Endothelial cell of umbilical vein (primary cell): ENCODE measurements at regions of chr5 and their contacts with region 1.

Region 1: DNA sequence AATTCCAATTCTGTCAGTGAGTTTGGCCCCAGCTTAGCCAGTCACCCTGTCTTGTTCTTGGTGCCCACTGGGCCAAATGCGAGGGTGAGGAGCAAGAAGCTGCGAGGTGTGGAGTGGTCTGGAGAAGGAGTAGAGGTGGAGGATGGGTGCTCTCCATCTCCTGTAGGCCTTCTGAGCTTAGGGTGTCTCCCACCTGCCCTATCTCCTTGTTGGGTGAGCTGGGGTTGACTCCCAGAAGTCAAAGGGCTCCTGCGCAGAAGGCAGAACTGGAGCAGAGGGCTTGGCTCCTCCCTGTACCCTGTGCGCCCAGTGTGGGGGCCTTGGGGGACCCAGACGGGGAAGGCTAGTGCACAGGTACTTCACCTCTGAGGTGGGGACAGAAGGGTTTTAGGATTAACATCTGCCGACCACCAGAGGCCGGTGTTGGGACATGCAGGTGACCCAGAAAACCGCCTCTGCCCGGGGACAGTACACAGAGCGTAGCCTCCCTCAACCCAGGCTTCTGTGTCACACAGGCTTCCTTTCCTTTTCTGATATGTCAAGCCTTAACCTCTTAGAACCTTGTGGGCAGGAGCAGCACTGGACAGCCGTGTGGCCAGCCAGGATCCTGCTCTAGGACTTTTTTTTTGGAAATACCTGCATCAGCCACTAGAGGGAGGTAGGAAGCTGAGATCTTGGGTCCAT is 16.9 kb downstream of the IL5 start:
- DNase-seq: peak; percentile 75
- H3K4me3 ChIP-seq: no peak overlapping the region
- H3K27ac ChIP-seq: no peak overlapping the region
- H3K4me1 ChIP-seq: no peaks in the 10 kb centered on the region
- H3K27me3 ChIP-seq: peaks cover under 1 to 3% of the 10 kb centered on the region in 2 experiments
- CTCF ChIP-seq: peak; percentile 76 to 83
- POLR2A ChIP-seq: no peak

Region 2: GRCh38 chr5:132437604-132438266 is 88.7 kb before region 1 on chr5:
- CTCF ChIA-PET with region 1: no interaction called
- POLR2A ChIA-PET with region 1: no interaction called
- dilution Hi-C with region 1: no loop called
- intact Hi-C with region 1: no loop called
- DNase-seq: peak; percentile 16
- H3K4me3 ChIP-seq: no peak overlapping the region
- H3K27ac ChIP-seq: no peak overlapping the region
- H3K4me1 ChIP-seq: peaks cover 4% of the 10 kb centered on the region
- H3K27me3 ChIP-seq: no peaks in the 10 kb centered on the region
- CTCF ChIP-seq: no peak
- POLR2A ChIP-seq: no peak

Region 3: DNA sequence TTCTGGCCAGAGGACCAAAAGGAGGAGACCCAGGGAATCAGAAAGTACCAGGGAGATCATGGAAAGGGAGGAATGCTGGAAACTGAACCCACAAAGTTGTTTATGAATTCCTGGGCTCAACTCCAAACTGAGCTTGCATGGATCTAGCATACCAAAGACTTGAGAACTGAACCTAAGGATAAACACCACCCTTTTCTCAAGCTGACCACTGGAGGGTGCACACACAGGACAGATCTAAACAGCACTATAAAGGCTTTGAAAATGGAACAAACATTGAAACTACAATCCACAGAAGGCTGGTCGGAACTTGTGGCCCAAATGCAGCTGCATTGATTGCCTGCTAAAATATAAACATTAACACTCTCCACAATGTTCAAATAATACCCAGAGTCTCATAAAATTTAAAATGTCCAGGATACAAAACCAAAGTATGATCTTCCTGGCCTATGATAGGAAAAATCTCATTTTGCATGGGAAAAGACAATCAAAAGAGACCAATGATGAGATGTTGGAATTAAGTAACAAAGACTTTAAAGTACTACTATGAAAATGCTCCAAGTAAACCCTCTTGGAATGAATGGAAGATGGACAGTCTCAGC is 20.2 kb before region 1 on chr5:
- CTCF ChIA-PET with region 1: interaction called, 19 read pairs
- POLR2A ChIA-PET with region 1: no interaction called
- dilution Hi-C with region 1: no loop called
- intact Hi-C with region 1: no loop called
- DNase-seq: peak; percentile 67
- H3K4me3 ChIP-seq: no peak overlapping the region
- H3K27ac ChIP-seq: no peak overlapping the region
- H3K4me1 ChIP-seq: peaks cover 35% of the 10 kb centered on the region
- H3K27me3 ChIP-seq: no peaks in the 10 kb centered on the region
- CTCF ChIP-seq: peak; percentile 43 to 68
- POLR2A ChIP-seq: no peak

Region 4: GRCh38 chr5:132540764-132541163 is 14.3 kb after region 1 on chr5:
- CTCF ChIA-PET with region 1: interaction called, 18 read pairs
- POLR2A ChIA-PET with region 1: no interaction called
- dilution Hi-C with region 1: no loop called
- intact Hi-C with region 1: no loop called
- DNase-seq: no peak
- H3K4me3 ChIP-seq: no peak overlapping the region
- H3K27ac ChIP-seq: no peak overlapping the region
- H3K4me1 ChIP-seq: no peaks in the 10 kb centered on the region
- H3K27me3 ChIP-seq: peaks cover 11 to 15% of the 10 kb centered on the region in 2 experiments
- CTCF ChIP-seq: no peak
- POLR2A ChIP-seq: no peak

Region 5: GRCh38 chr5:132549576-132549975 is 23.1 kb after region 1 on chr5:
- CTCF ChIA-PET with region 1: interaction called, 20 read pairs
- POLR2A ChIA-PET with region 1: no interaction called
- dilution Hi-C with region 1: no loop called
- intact Hi-C with region 1: no loop called
- DNase-seq: no peak
- H3K4me3 ChIP-seq: no peak overlapping the region
- H3K27ac ChIP-seq: no peak overlapping the region
- H3K4me1 ChIP-seq: no peaks in the 10 kb centered on the region
- H3K27me3 ChIP-seq: peaks cover 3 to 6% of the 10 kb centered on the region in 2 experiments
- CTCF ChIP-seq: no peak
- POLR2A ChIP-seq: no peak

Region 6: DNA sequence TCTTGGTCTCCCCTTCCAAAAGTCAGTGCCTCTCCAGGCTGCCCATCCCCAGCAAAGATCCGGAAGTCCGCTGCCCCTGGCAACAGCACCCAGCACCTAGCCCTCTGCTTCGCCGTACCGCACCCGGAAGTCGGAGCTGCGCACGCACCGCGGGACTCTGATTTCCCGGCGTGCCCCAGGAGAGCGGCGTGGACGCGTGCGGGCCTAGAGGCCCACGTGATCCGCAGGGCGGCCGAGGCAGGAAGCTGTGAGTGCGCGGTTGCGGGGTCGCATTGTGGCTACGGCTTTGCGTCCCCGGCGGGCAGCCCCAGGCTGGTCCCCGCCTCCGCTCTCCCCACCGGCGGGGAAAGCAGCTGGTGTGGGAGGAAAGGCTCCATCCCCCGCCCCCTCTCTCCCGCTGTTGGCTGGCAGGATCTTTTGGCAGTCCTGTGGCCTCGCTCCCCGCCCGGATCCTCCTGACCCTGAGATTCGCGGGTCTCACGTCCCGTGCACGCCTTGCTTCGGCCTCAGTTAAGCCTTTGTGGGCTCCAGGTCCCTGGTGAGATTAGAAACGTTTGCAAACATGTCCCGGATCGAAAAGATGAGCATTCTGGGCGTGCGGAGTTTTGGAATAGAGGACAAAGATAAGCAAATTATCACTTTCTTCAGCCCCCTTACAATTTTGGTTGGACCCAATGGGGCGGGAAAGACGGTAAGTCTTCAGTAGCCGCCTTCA is 30.5 kb after region 1 on chr5 and contains the start of gene RAD50:
- CTCF ChIA-PET with region 1: interaction called, 20 read pairs
- POLR2A ChIA-PET with region 1: no interaction called
- dilution Hi-C with region 1: no loop called
- intact Hi-C with region 1: no loop called
- DNase-seq: peak; percentile 83
- H3K4me3 ChIP-seq: peak within 1 kb of the TSS; percentile 63 to 90 (median 64)
- H3K27ac ChIP-seq: peak within 1 kb of the TSS; percentile 69
- H3K4me1 ChIP-seq: peaks cover 15% of the 10 kb centered on the region
- H3K27me3 ChIP-seq: no peaks in the 10 kb centered on the region
- CTCF ChIP-seq: no peak
- POLR2A ChIP-seq: peak; percentile 88
- total RNA-seq, gene RAD50: 18.7 and 20.4 TPM in 2 replicates

Region 7: DNA sequence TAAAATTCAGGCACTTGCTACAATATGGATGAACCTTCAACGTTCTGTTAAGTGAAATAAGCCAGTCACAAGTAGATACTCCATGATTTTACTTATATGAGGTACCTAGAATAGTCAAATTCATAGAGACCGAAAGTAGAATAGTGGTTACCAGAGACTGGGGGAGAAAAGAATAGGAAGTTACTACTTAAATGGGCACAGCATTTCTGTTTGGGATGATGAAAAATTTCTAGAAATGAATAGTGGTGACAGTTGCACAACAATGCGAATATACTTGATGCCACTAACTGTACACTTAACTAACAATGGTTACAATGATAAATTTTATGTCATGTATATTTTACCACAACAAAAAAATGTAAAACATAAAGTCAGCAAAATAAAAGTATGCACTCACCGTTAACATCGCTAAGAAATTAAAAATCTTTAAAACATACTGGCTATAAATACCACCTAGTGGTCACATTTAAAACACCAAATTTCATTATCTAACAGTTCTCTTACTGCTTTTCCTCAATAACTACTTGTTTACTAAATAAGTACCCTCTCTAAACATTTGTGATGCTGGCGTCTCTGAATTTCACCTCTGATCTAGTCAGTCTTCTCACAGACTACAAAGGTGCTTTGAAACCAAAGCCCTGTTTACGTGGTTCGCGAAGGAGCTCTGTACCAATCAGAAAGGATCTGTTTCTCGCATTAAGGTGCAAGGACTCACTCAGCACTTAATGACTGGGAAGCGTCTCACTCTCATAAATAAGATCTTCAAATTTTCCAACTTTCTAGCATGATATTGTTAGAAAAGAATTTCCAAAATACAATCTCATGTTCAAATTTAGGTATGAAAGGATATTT is 188.2 kb after region 1 on chr5:
- CTCF ChIA-PET with region 1: interaction called, 10 read pairs
- POLR2A ChIA-PET with region 1: no interaction called
- dilution Hi-C with region 1: no loop called
- intact Hi-C with region 1: loop called (anchors 5 kb)
- DNase-seq: peak; percentile 28
- H3K4me3 ChIP-seq: no peak overlapping the region
- H3K27ac ChIP-seq: no peak overlapping the region
- H3K4me1 ChIP-seq: no peaks in the 10 kb centered on the region
- H3K27me3 ChIP-seq: no peaks in the 10 kb centered on the region
- CTCF ChIP-seq: peak; percentile 12 to 18
- POLR2A ChIP-seq: no peak

Region 8: DNA sequence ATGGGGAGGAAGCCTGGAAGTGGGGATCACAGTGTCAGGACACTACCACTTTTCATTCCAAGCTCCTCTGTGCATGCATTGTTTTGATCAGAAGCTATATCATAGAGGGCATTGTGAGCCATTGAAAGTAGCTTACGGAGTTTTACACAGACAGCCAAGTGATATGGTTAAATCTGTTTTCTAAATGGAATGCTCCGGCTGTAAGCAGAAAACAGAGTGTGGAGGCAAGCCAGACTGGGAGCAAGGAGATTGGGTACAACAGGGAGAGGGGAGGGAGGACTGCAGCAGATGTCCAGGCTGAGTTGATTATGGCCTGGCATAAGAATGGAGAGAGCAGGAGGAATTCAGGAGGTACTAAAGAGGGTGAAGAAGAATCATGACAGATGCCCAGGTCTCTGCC is 271.2 kb after region 1 on chr5:
- CTCF ChIA-PET with region 1: interaction called, 11 read pairs
- POLR2A ChIA-PET with region 1: no interaction called
- dilution Hi-C with region 1: no loop called
- intact Hi-C with region 1: loop called (anchors 5 kb)
- DNase-seq: no peak
- H3K4me3 ChIP-seq: no peak overlapping the region
- H3K27ac ChIP-seq: no peak overlapping the region
- H3K4me1 ChIP-seq: no peaks in the 10 kb centered on the region
- H3K27me3 ChIP-seq: peaks cover 10 to 22% of the 10 kb centered on the region in 2 experiments
- CTCF ChIP-seq: no peak
- POLR2A ChIP-seq: no peak